Posterior vena cava (tissue), 2 donors: ENCODE measurements at regions of chr3 and their contacts with region 1.

Region 1: GRCh38 chr3:52834871-52835501 is at the start of gene MUSTN1:
- DNase-seq: no peak
- total RNA-seq, gene MUSTN1: 78.5 to 105 TPM

Region 2: GRCh38 chr3:52090131-52090932 is 744.7 kb before region 1 on chr3:
- intact Hi-C with region 1: loop called in 1 of 2 experiments (anchors 5 kb)
- DNase-seq: peak; percentile 85